Breast epithelium (tissue), 4 donors: ENCODE measurements at regions of chr2 and their contacts with region 1.

Region 1: DNA sequence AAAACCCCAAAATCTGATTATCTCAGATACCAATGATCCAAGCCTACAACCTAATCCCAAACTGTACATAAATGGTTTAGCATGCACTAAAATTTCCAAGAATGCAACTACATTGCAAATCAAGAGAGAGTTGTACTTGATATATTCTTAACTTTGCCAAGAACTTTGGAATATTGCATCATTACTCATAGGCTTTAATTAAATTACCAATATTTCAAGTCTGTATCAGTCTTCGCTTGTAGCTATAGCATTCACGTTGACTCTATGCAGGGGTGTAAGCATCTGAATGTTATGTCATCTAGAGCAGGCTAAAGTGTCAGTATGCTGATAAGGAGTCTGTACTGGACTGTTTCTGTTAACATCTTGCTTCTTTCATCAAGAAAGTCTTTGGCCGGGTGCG is 56.3 kb downstream of the FOXI3 start:
- DNase-seq: no peak
- H3K4me3 ChIP-seq: no peak overlapping the region
- H3K27ac ChIP-seq: no peak overlapping the region
- H3K4me1 ChIP-seq: no peaks in the 10 kb centered on the region
- H3K27me3 ChIP-seq: no peaks in the 10 kb centered on the region
- CTCF ChIP-seq: no peak
- POLR2A ChIP-seq: no peak

Region 2: DNA sequence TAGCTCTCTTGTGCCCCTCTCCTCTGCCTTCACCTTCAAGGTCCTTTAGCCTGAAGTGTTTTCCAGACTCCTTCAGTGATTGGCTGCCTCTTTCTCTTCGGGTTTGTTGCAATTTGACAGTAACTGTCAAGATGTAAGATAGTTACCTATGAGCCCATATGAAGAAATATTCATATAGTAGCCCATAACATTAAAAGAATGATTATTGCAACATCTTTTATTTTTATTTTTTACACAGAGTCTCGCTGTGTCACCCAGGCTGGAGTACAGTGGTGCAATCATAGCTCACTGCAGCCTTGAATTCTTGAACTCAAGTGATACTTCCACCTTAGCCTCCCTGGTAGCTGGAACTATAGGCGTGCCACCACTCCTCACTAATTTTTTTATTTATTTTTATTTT is 24.2 kb before region 1 on chr2:
- intact Hi-C with region 1: loop called (anchors 1 kb)
- DNase-seq: no peak
- H3K4me3 ChIP-seq: no peak overlapping the region
- H3K27ac ChIP-seq: no peak overlapping the region
- H3K4me1 ChIP-seq: no peaks in the 10 kb centered on the region
- H3K27me3 ChIP-seq: no peaks in the 10 kb centered on the region
- CTCF ChIP-seq: no peak
- POLR2A ChIP-seq: no peak